Posterior vena cava (tissue), 2 donors: ENCODE measurements at regions of chr12 and their contacts with region 1.

Region 1: DNA sequence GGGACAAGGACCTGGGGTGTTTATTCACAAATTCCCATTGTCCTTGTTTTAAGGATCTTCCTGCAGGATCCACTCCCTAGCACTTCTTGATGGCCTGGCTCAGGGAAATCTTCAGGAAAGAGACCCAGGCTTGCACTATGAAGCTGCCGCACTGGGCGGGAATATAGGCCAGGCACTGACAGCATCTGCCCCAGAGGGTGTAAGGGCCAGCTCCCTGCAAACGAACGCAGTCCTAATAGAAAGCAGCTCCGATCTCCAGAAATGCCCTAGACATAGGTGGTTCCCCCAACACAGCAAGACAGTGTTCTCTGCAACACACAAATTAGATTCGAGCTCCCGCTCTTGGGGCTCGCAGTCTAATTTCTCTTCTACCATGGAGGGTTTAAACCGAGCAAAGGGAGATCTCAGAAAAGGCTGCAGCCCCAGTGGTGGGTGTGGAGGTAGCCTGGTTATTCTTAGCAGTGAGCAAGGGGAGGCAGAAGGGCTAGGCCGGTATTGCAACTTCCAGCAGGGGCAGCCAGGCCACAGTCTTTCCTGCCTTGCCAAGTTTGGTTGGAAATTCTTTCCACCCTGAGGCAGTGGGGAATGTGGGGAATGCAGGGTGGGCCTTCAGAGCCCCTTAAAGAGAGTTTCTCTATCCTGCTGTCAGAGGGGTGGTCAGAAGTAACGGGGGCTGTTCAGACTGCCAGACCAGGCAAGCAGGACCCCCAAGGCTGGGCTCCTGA is 16.1 kb upstream of the WSCD2 start:
- DNase-seq: no peak

Region 2: DNA sequence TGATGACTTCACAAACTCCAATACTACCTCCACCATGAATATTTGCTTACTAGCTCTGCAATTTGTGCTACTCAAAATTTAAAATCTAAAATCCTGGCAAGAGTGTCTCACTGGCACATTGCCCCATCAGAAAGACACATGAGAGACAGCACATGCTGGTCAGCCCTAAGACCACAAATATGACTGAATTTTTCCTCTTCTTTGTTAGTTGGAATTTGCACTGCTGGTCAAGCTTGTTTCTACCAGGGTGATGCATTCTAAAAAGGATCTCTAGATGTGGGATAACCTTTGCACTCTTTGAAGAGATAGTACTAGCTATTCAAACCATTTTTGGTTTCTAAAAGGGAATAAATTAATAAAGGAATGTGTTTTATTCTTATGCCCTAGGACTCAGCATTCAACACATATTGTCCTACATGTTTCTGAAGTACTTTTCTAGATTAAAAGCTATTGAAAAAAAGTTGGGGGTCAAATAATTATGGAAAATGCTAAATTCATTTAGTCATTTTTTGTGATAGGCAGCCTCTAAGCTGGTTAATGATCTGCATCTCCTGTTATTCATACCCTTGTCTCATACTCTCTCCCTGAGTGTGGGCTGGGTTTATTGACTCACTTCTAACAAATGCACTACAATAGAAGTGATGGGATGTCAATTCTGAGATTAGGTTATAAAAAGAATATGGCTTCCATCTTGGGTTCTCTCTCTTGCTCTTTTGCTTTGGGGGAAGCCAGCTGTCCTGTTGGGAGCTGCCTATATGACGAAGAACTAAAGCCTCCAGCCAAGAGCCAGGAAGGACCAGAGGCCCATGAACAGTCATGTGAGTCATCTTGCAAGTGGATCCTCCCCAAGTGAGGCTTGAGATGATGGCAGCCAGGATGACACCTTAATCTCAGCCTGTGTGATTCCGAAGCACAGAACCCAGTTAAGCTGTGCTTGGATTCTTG is 808.1 kb before region 1 on chr12:
- intact Hi-C with region 1: loop called in 1 of 2 experiments (anchors 5 kb)
- DNase-seq: no peak

Region 3: GRCh38 chr12:107580750-107581618 is 532.0 kb before region 1 on chr12:
- intact Hi-C with region 1: no loop called
- DNase-seq: no peak